Calu3 (cell line): ENCODE measurements at regions of chrX and their contacts with region 1.

Region 1: DNA sequence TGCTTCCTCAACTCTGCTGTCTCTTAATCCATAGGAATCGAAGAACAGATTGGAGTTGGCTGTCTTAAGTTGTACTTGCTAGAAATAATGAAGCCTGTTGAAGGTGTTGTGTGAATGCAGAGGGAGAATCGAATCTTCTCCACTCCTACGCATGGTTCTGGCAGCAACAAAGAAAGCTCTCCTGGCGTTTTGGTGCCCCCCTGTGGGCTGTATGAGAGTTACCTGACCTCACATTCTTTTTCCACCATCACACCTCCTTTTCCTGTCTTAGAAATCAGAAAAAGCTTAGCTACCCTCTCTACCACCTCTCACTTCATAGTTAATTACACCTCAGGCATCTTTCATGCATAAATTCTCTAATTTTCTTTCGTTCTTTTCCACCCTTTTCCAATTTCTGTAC is 16.3 kb downstream of the KLF8 start:
- DNase-seq: peak; percentile 57
- H3K4me3 Mint-ChIP-seq: no peak overlapping the region
- H3K27ac Mint-ChIP-seq: no peak overlapping the region
- H3K4me1 Mint-ChIP-seq: no peaks in the 10 kb centered on the region
- H3K27me3 Mint-ChIP-seq: no peaks in the 10 kb centered on the region
- CTCF ChIP-seq: no peak

Region 2: DNA sequence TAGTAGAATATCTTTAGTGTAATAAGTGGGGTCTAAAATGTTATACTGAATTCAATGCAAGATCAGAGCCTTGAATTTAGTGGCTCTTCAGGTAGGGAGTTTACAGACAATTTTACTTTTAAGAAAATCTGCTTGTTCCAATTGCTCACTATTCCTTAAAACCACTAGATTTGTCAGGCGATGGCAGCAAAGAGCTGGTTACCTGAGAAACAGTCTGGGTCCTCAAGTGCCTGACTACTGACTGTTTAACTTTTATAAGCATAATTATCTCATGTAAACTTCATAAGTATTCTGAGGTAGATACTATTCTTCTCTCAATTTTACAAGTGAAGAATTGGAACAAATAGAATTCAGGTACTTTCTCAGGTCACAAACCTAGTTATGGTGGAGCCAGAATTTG is 446.7 kb before region 1 on chrX:
- CTCF ChIA-PET with region 1: interaction called, 4 read pairs
- intact Hi-C with region 1: loop called (anchors 10 kb)
- DNase-seq: no peak
- H3K4me3 Mint-ChIP-seq: no peak overlapping the region
- H3K27ac Mint-ChIP-seq: no peak overlapping the region
- H3K4me1 Mint-ChIP-seq: no peaks in the 10 kb centered on the region
- H3K27me3 Mint-ChIP-seq: no peaks in the 10 kb centered on the region
- CTCF ChIP-seq: no peak

Region 3: GRCh38 chrX:55907968-55908607 is 340.4 kb before region 1 on chrX:
- CTCF ChIA-PET with region 1: interaction called, 15 read pairs
- intact Hi-C with region 1: loop called (anchors 5 kb)
- DNase-seq: peak; percentile 83
- H3K4me3 Mint-ChIP-seq: peak overlapping the region; percentile 78
- H3K27ac Mint-ChIP-seq: peak overlapping the region; percentile 79
- H3K4me1 Mint-ChIP-seq: peaks cover 32% of the 10 kb centered on the region
- H3K27me3 Mint-ChIP-seq: no peaks in the 10 kb centered on the region
- CTCF ChIP-seq: peak; percentile 56

Region 4: DNA sequence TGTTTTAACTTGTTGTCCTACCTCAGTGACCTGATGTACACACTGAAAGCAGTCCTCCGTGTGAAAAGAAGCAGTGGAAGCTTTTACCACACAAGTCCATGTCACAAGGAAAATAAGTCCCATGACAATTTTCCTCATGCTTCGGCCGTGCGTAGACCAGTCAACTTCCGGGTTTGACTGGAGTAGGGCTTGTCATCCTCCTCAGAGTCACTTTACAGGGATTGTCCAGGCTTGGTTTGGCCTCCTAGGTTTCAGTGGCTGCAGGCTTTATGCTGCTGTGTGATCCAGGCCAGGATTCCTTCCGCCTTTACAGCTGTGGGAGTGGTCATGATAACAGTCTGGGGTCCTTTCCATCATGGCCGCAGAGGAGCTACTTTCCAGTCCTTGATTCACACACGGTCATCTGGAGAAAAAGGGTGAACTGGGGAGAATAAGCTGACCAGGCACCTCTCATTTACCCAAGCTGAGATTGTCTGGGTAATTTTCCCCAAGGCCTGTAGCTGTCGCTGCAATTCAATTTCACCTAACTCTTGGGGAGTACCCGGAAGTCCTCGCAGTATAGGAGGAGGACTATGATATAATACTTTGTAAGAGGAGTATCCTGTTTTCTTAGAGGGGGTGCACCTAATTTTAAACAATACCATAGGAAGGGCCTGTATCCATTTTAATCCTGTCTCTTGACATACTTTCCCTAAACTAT is 222.5 kb before region 1 on chrX:
- CTCF ChIA-PET with region 1: no interaction called
- intact Hi-C with region 1: no loop called
- DNase-seq: peak; percentile 2
- H3K4me3 Mint-ChIP-seq: no peak overlapping the region
- H3K27ac Mint-ChIP-seq: no peak overlapping the region
- H3K4me1 Mint-ChIP-seq: peaks cover 19% of the 10 kb centered on the region
- H3K27me3 Mint-ChIP-seq: no peaks in the 10 kb centered on the region
- CTCF ChIP-seq: no peak

Region 5: GRCh38 chrX:56130031-56130430 is 118.5 kb before region 1 on chrX:
- CTCF ChIA-PET with region 1: no interaction called
- intact Hi-C with region 1: loop called (anchors 10 kb)
- DNase-seq: peak; percentile 55
- H3K4me3 Mint-ChIP-seq: peak overlapping the region; percentile 41
- H3K27ac Mint-ChIP-seq: peak overlapping the region; percentile 82
- H3K4me1 Mint-ChIP-seq: peaks cover 64% of the 10 kb centered on the region
- H3K27me3 Mint-ChIP-seq: no peaks in the 10 kb centered on the region
- CTCF ChIP-seq: no peak